Breast epithelium (tissue), 4 donors: ENCODE measurements at regions of chr20 and their contacts with region 1.

Region 1: DNA sequence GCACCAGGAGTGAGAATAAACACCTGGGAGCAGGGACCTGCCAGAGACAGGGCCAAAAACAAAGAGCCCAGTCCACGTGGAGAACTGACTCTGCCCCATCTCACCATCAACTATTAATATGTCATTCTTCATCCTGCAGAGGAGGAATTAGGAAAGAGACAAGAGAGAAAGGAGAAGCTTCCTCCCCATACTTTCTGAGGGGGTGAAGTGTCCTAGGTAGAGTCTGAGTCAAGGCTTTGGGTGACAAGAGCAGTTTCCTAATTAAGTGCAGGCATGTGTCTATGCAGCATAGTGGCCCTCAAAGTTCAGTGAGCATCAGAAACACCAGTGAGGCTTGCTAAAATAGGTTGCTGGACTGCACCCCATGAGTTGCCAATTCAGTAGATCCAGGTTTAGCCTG is 40.7 kb upstream of the BMP2 start:
- DNase-seq: no peak
- H3K4me3 ChIP-seq: no peak overlapping the region
- H3K27ac ChIP-seq: no peak overlapping the region
- H3K4me1 ChIP-seq: no peaks in the 10 kb centered on the region
- H3K27me3 ChIP-seq: peaks cover 0 to 3% of the 10 kb centered on the region in 2 donors
- CTCF ChIP-seq: no peak
- POLR2A ChIP-seq: no peak

Region 2: DNA sequence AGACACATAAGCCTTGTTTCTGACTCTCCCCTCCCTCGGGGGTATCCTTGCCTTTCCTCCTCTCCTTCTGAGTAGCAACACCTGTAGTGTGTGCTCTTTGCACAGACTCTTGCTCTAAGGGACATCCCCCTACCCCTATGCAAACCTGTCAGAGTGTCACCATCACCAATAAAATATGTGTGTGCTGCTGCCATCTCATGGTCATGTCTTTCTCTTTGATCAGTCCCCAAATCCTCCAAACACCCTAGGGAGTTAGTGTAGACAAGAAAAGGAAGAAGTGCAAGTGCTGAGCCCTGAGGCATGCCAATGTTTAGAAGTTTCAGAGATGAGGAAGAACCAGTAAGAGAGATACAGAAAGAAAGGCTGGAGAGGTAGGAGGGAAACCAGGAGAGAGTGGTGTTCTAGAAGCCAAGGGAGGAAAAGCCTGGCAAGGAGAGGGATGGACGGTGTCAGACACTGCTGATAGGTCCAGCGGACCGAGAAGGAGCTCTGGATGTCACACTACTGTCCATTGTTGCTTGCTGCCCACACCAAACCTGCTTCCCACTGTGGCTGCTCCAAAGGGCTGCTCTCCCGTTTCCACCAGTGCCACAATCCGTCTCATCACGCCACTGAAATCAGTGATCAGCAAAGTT is 792.8 kb before region 1 on chr20:
- intact Hi-C with region 1: loop called (anchors 5 kb)
- DNase-seq: no peak
- H3K4me3 ChIP-seq: no peak overlapping the region
- H3K27ac ChIP-seq: no peak overlapping the region
- H3K4me1 ChIP-seq: no peaks in the 10 kb centered on the region
- H3K27me3 ChIP-seq: peaks cover 0 to 4% of the 10 kb centered on the region in 2 donors
- CTCF ChIP-seq: no peak
- POLR2A ChIP-seq: no peak

Region 3: GRCh38 chr20:6756693-6757595 is 30.2 kb after region 1 on chr20:
- intact Hi-C with region 1: no loop called
- DNase-seq: no peak
- H3K4me3 ChIP-seq: no peak overlapping the region
- H3K27ac ChIP-seq: no peak overlapping the region
- H3K4me1 ChIP-seq: no peaks in the 10 kb centered on the region
- H3K27me3 ChIP-seq: no peaks in the 10 kb centered on the region
- CTCF ChIP-seq: no peak
- POLR2A ChIP-seq: no peak

Region 4: GRCh38 chr20:6786548-6786947 is 59.8 kb after region 1 on chr20:
- intact Hi-C with region 1: no loop called
- DNase-seq: no peak
- H3K4me3 ChIP-seq: no peak overlapping the region
- H3K27ac ChIP-seq: no peak overlapping the region
- H3K4me1 ChIP-seq: no peaks in the 10 kb centered on the region
- H3K27me3 ChIP-seq: no peaks in the 10 kb centered on the region
- CTCF ChIP-seq: no peak
- POLR2A ChIP-seq: no peak